MCF 10A (cell line): ENCODE measurements at regions of chr7 and their contacts with region 1.

Region 1: GRCh38 chr7:70829221-70830059 is 302.5 kb upstream of the GALNT17 start:
- DNase-seq: peak; percentile 8
- H3K4me3 Mint-ChIP-seq: no peak overlapping the region
- H3K27ac Mint-ChIP-seq: no peak overlapping the region
- H3K4me1 Mint-ChIP-seq: no peaks in the 10 kb centered on the region
- H3K27me3 Mint-ChIP-seq: no peaks in the 10 kb centered on the region
- CTCF ChIP-seq: peak; percentile 88

Region 2: GRCh38 chr7:70630818-70631457 is 198.5 kb before region 1 on chr7:
- CTCF ChIA-PET with region 1: no interaction called
- POLR2A ChIA-PET with region 1: no interaction called
- intact Hi-C with region 1: no loop called
- DNase-seq: no peak
- H3K4me3 Mint-ChIP-seq: no peak overlapping the region
- H3K27ac Mint-ChIP-seq: no peak overlapping the region
- H3K4me1 Mint-ChIP-seq: no peaks in the 10 kb centered on the region
- H3K27me3 Mint-ChIP-seq: no peaks in the 10 kb centered on the region
- CTCF ChIP-seq: no peak

Region 3: DNA sequence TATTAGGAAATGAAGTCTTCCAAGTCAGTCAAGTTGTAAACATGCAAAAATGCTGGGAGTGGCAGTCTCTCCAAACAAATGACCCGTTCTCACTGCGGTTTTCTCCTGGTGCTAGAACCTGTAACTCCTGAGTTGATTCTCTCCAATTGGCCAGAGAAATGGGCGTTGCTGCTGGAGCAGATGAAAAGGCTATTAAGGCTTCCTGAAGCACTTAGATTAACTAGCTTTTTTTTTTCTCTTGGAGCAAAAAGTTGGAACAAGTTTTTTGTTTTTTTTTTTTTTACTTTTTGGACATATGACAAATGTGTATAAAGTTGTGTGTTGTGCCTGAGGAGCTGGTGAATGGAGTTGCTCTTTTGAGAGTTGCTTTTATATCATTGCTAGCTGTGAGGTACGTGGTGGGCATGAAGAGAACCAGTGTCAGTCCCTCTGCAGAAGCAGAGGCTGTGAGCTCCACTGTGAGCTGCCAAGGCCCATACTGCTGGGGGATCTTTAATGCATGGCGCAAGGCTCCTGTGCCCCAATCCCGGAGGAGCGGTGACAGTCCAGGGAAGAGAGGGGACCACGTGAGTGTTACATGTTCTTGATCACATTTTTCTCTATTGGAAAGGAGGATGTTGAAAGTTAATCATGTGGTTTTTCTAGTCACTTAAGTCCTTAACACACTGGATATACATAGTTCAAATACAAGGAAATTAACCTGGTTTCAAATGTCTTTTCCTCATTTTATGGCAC is 91.1 kb before region 1 on chr7:
- CTCF ChIA-PET with region 1: no interaction called
- POLR2A ChIA-PET with region 1: no interaction called
- intact Hi-C with region 1: loop called (anchors 5 kb)
- DNase-seq: peak; percentile 10
- H3K4me3 Mint-ChIP-seq: no peak overlapping the region
- H3K27ac Mint-ChIP-seq: no peak overlapping the region
- H3K4me1 Mint-ChIP-seq: peaks cover 10% of the 10 kb centered on the region
- H3K27me3 Mint-ChIP-seq: no peaks in the 10 kb centered on the region
- CTCF ChIP-seq: no peak

Region 4: DNA sequence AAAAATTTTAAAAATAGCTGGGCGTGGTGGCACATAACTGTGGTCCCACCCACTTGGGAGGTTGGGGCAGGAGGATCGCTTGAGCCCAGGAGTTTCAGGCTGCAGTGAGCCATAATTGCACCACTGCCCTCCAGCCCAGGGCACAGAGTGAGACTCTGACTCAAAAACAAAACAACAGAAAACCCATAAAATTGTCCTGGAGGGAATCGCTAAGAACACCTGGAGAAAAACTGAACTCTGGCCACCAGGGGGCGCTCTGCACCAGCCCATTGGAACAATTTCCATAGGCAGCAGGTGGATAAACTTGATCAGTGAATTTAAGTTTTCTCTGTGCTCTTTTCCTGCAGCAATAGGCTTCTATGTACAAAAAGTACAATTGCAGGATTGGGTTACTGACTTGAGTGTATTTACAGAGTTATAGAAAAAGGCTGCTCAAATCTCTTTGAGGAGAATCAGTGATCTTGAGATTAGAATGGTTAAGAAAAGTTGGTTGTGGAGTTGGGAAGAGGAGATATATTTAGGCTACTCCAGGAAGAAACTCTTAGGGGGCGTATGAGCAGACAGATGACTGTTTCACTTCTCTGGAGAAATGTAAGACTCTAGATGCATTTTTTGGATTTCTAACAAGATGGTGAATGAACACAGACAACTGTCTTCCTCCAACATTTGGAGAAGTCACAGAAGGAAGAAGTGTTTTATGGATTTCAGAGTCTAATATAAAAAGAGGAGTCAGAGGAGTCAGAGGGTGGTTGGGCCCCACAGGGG is 27.6 kb after region 1 on chr7:
- CTCF ChIA-PET with region 1: interaction called, 11 read pairs
- POLR2A ChIA-PET with region 1: no interaction called
- intact Hi-C with region 1: loop called (anchors 1 kb)
- DNase-seq: peak; percentile 18
- H3K4me3 Mint-ChIP-seq: no peak overlapping the region
- H3K27ac Mint-ChIP-seq: no peak overlapping the region
- H3K4me1 Mint-ChIP-seq: no peaks in the 10 kb centered on the region
- H3K27me3 Mint-ChIP-seq: no peaks in the 10 kb centered on the region
- CTCF ChIP-seq: peak; percentile 72

Region 5: DNA sequence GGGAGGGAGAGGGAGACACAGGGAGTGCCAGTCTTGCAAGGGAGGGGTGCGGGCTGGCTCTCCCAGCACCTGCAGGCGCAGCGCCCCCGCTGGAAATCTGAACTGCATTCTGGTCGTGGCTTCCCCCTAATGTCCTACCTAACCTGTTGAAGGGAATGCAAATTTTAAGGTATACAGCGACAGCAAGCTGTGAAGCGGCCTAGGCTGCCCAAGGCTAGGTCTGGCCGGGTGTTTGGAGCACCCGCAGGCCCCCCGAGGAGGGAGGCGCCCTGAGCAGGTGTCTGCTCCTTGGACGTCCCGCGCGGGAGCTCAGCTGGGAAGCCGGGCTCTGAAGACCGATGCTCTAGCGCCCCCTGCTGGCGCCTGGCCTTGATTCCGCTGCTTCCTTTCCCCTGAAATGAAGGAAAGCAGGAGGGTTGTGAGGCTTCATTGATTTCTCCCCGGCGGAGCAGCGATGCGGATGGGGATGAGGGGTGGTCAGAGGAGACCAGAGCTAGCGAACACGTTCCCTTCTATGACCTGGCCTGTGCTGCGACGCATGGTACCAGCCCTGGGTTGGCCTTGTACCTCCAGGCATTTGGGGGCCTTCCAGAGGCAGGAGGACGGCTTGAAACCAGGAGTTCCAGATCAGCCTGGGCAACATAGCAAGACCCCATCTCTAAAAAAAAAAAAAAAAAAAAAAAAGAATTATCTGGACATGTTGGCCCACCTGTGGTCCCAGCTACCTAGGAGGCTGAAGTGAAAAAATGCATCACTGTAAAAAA is 903.8 kb after region 1 on chr7:
- CTCF ChIA-PET with region 1: interaction called, 55 read pairs
- POLR2A ChIA-PET with region 1: no interaction called
- intact Hi-C with region 1: loop called (anchors 1 kb)
- DNase-seq: peak; percentile 0
- H3K4me3 Mint-ChIP-seq: no peak overlapping the region
- H3K27ac Mint-ChIP-seq: no peak overlapping the region
- H3K4me1 Mint-ChIP-seq: no peaks in the 10 kb centered on the region
- H3K27me3 Mint-ChIP-seq: no peaks in the 10 kb centered on the region
- CTCF ChIP-seq: peak; percentile 87

Region 6: GRCh38 chr7:72183684-72184234 is 1354.3 kb after region 1 on chr7:
- CTCF ChIA-PET with region 1: no interaction called
- POLR2A ChIA-PET with region 1: no interaction called
- intact Hi-C with region 1: loop called (anchors 10 kb)
- DNase-seq: no peak
- H3K4me3 Mint-ChIP-seq: no peak overlapping the region
- H3K27ac Mint-ChIP-seq: no peak overlapping the region
- H3K4me1 Mint-ChIP-seq: peaks cover 6% of the 10 kb centered on the region
- H3K27me3 Mint-ChIP-seq: no peaks in the 10 kb centered on the region
- CTCF ChIP-seq: peak; percentile 49